ENCODE measurements at regions of chr6 and their contacts with region 1.

Region 1: DNA sequence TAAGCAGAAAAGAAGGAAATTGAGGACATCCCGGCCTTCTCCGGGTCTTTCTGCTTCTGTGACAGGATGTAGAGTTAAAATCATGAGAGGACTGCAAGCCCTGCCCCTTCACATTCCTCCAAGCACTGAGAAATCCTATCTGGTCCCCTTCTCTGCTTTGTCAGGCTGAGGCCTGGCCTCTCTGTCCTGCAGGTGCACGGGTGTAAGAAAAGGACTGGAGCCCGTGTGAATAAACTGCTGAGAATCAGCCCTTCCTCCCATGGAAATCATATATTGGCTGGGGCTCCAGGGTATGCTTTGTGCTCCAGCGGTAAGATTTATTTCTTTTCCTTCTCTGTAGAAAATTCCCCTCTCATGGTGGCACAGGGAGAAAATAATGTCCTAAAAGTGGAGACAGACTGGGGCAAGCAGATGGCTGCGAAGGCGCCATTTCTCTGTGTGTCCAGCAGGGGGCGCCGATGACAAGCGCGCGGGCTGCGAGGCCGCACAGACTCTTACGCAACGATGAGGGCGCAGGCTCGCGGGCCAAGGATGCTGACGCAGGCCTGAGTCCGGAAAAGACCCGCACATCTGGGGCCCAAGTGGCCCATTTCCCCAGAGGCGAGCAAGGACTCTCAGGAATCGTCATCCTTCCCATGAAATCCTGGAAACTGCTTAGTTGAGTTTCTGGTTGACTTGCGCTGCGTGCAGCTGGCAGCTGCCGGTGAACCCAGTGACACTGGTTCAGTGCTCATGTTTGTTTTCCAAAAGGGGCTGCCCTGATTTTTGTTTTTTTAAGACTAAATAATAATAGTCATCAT is 258.6 kb downstream of the ADGB start:
- DNase-seq: peak; percentile 80 to 97 (median 91)

Region 2: DNA sequence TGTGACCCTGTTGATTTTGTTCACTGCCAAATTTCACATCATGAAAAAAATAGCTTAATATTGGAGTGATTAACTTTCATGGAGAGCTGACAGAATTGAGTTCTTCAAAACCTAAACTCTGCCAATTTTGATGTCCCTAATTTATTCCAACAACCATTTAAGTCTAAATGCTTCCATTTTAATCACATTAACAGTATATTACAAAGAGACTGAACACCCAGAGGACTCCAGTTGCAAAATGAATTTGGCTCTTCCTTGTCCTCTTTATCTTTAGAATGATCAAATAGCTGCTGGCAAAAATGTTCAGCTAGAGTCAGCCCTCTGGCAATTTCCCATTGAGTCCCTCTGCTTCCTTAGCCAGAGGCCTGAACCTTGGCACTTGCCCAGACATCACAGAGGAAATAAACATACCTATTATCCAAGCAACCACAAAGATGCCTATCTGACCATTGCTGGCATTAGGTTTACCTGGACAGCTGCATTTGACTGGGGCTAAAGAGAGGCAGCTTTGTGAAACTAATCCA is 47.9 kb after region 1 on chr6:
- intact Hi-C with region 1: no loop called
- DNase-seq: peak in 6 of 42 donors; percentile 6 to 34 (median 18)

Region 3: DNA sequence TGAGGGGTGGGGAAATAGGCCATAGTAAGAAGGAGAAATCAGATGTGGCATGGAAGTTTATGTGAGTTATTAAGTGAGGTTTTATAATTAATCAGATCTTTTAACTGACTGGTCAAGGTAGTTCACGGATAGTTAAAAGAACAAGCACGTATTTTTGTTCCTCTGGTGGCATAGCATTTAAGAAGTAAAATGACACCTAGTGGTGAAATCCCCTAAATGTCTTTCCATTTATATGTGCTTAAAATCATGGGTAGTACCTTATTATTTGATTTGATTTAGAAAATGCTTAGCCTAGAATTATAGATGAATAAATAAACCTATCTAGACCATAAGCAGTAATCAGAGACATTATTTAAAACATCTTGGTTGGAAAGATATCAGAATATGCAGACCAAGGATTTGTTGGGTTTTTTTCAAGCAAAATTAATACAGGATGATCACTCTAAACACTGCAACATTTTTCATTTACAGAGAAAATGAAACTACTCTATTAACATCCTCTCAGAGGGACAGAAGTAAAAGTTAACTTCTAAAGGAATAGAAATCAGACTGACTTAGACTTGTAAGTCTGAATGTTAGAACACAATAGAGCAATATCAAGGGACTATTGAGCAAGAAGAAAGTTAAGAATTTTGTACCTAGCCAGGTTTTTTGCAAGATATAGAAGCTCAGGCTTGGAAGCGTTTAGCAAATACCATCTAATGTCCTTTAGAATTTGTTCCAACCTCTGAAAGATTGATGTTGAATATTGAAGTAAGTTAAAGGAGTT is 427.9 kb after region 1 on chr6:
- intact Hi-C with region 1: loop called (anchors 5 kb)
- DNase-seq: no peak